Aorta (tissue), 5 donors: ENCODE measurements at regions of chrX and their contacts with region 1.

Region 1: DNA sequence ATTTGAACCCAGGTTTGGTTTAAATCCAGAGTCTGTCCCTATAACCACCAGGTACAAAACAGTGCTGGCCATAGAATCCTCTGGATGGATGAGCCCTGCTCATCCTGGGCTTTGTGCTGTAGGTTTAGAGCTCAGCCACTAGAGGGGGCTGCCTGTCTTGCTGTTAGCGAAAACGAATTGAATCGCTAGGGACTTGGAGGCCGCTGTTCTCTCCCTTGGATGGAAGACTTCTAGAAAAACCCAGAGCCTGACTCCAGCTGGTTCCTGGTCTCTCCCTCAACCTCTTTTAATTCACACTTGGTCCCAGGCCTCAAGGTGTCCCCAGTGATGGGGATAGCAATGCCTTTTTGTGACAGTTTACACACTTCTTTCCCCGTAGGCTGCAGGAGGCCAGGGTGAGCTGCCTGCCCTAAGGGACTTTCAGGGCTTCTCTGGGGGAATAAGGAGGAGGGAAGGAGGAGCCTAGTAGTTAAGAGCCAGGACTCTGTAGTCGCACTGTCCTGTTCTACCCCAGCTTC is 8.7 kb downstream of the RIPPLY1 start:
- DNase-seq: peak in 1 of 2 donors; percentile 58
- ATAC-seq: peak; percentile 78
- H3K4me3 ChIP-seq: no peak overlapping the region
- H3K27ac ChIP-seq: no peak overlapping the region
- H3K4me1 ChIP-seq: no peaks in the 10 kb centered on the region
- H3K27me3 ChIP-seq: no peaks in the 10 kb centered on the region

Region 2: GRCh38 chrX:106940068-106940467 is 45.6 kb after region 1 on chrX:
- intact Hi-C with region 1: loop called in 1 of 2 experiments (anchors 5 kb)
- DNase-seq: no peak
- ATAC-seq: no peak
- H3K4me3 ChIP-seq: no peak overlapping the region
- H3K27ac ChIP-seq: no peak overlapping the region
- H3K4me1 ChIP-seq: no peaks in the 10 kb centered on the region
- H3K27me3 ChIP-seq: no peaks in the 10 kb centered on the region

Region 3: DNA sequence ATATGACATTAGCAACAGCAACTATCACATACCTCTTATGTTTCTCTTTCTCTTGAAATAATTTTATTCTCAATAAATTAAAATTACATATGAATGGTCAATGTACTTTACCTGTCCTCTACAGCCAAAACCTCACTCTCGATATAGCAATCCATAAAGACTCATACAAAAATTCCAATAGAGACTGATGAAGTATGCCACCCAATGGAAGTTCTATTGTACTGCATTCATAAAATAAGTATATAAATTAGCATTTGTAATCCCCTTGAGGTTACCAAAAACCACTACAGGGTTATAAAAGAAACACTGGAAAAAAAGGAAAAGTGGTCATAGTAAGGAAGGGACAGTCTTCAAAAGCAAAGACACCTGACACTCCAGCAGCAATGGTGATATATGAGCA is 58.5 kb after region 1 on chrX:
- intact Hi-C with region 1: loop called in 1 of 2 experiments (anchors 5 kb)
- DNase-seq: no peak
- ATAC-seq: no peak
- H3K4me3 ChIP-seq: no peak overlapping the region
- H3K27ac ChIP-seq: no peak overlapping the region
- H3K4me1 ChIP-seq: no peaks in the 10 kb centered on the region
- H3K27me3 ChIP-seq: no peaks in the 10 kb centered on the region

Region 4: DNA sequence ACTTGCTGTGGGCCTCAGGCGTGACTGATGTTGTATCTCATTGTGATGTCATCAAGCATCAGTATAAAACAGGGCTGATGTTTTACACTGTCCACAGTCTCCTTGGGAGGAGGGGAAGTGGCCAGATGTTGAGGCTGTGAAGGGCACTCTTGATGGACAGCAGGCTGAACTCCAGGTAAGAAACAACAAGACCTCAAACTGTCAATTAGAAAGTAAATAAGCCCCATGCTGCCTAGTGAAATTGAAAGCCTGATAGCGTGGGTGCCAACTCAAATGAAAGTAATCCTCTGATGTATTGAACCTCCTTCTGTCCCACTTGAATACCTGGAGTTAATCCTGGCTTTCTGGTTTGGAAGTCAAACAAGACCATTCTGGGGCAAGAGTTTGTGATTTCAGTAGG is 1170.2 kb after region 1 on chrX:
- intact Hi-C with region 1: loop called in 1 of 2 experiments (anchors 10 kb)
- DNase-seq: no peak
- ATAC-seq: no peak
- H3K4me3 ChIP-seq: no peak overlapping the region
- H3K27ac ChIP-seq: no peak overlapping the region
- H3K4me1 ChIP-seq: no peaks in the 10 kb centered on the region
- H3K27me3 ChIP-seq: no peaks in the 10 kb centered on the region